ENCODE measurements at regions of chr19 and their contacts with region 1.

Region 1: GRCh38 chr19:44643605-44644401 is at the start of gene PVR:
- DNase-seq: peak; percentile 80 to 87
- ATAC-seq: peak; percentile 87 to 92 (median 88)
- H3K4me3 ChIP-seq: peak within 1 kb of the TSS; percentile 88
- H3K27ac ChIP-seq: peak within 1 kb of the TSS; percentile 92
- H3K4me1 ChIP-seq: peaks cover 43% of the 10 kb centered on the region
- H3K27me3 ChIP-seq: no peaks in the 10 kb centered on the region
- CTCF ChIP-seq: no peak
- total RNA-seq, gene PVR: 25.0 to 117 (median 41.8) TPM

Region 2: GRCh38 chr19:44587963-44588770 is 55.6 kb before region 1 on chr19:
- intact Hi-C with region 1: loop called (anchors 5 kb)
- DNase-seq: no peak
- ATAC-seq: peak; percentile 96 to 98 (median 97)
- H3K4me3 ChIP-seq: no peak overlapping the region
- H3K27ac ChIP-seq: peak overlapping the region; percentile 82
- H3K4me1 ChIP-seq: peaks cover 16% of the 10 kb centered on the region
- H3K27me3 ChIP-seq: no peaks in the 10 kb centered on the region
- CTCF ChIP-seq: peak; percentile 28